ENCODE measurements at regions of chr10 and their contacts with region 1.

Region 1: GRCh38 chr10:15719899-15720634 is at the start of gene ITGA8:
- DNase-seq: peak; percentile 64
- ATAC-seq: peak; percentile 68
- H3K4me3 ChIP-seq: peak within 1 kb of the TSS; percentile 46
- H3K27ac ChIP-seq: peak within 1 kb of the TSS; percentile 71
- H3K4me1 ChIP-seq: no peaks in the 10 kb centered on the region
- H3K27me3 ChIP-seq: peaks cover 32% of the 10 kb centered on the region
- CTCF ChIP-seq: peak; percentile 37
- total RNA-seq, gene ITGA8: 33.9 TPM

Region 2: GRCh38 chr10:15433850-15434537 is 286.1 kb before region 1 on chr10:
- intact Hi-C with region 1: loop called (anchors 5 kb)
- DNase-seq: no peak
- ATAC-seq: peak; percentile 68
- H3K4me3 ChIP-seq: peak overlapping the region; percentile 36
- H3K27ac ChIP-seq: no peak overlapping the region
- H3K4me1 ChIP-seq: no peaks in the 10 kb centered on the region
- H3K27me3 ChIP-seq: no peaks in the 10 kb centered on the region
- CTCF ChIP-seq: peak; percentile 79

Region 3: GRCh38 chr10:15585303-15585715 is 134.8 kb before region 1 on chr10:
- intact Hi-C with region 1: loop called (anchors 10 kb)
- DNase-seq: peak; percentile 67
- ATAC-seq: peak; percentile 83
- H3K4me3 ChIP-seq: no peak overlapping the region
- H3K27ac ChIP-seq: no peak overlapping the region
- H3K4me1 ChIP-seq: no peaks in the 10 kb centered on the region
- H3K27me3 ChIP-seq: no peaks in the 10 kb centered on the region
- CTCF ChIP-seq: peak; percentile 77

Region 4: DNA sequence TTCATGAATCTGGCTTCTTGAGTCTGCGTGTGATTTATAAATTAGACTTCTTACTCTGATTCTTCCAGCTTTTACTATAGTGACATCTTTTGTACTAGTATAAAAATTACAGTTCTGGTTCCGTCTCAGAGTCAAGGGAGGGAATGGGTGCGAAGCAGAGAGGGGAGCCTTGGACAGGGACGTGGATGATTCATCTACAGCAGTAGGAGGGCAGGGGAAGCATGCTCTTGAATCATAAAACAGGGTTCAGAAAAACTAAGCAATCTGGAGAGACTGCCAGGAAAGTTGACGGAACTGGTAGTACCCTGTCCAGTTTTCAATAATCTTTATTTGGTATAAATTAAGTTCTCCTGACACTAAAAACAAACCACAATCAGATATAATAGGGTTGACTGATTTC is 58.5 kb before region 1 on chr10:
- intact Hi-C with region 1: no loop called
- DNase-seq: no peak
- ATAC-seq: no peak
- H3K4me3 ChIP-seq: no peak overlapping the region
- H3K27ac ChIP-seq: no peak overlapping the region
- H3K4me1 ChIP-seq: no peaks in the 10 kb centered on the region
- H3K27me3 ChIP-seq: no peaks in the 10 kb centered on the region
- CTCF ChIP-seq: no peak

Region 5: DNA sequence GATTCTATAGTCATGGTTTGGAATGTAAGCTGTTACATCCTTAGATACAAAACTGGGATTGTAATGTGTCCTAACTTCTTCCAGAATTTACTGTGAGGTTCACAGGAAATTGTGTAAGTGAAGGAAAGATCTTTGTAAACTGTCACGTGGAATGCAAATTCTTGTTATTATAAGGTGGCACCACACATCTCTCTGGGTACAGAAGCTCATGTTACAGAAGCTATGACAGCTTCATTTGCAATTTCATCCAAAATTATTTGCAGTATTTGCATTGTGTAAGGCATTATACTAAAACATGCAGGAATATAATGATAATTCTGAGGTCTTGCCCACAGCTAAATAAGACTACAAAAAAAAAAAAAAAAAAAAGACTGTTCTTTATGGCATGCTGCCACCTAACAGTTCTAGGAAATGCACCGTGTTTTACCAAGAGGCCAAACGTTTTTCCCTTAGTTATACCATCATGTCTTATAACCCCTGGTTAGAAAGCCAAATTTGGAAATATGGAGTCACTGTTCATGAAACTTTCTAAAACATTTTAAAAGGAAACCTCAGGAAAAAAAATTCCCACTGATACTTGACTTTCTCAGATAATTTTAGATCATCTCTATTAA is 122.6 kb after region 1 on chr10:
- intact Hi-C with region 1: no loop called
- DNase-seq: no peak
- ATAC-seq: no peak
- H3K4me3 ChIP-seq: no peak overlapping the region
- H3K27ac ChIP-seq: no peak overlapping the region
- H3K4me1 ChIP-seq: no peaks in the 10 kb centered on the region
- H3K27me3 ChIP-seq: no peaks in the 10 kb centered on the region
- CTCF ChIP-seq: no peak

Measured in upper lobe of right lung (tissue), 1 donor.